Activated CD4-positive, alpha-beta memory T cell treated with anti-CD3 and anti-CD28 coated beads for 36 hours (primary cell): ENCODE measurements at regions of chr5 and their contacts with region 1.

Region 1: DNA sequence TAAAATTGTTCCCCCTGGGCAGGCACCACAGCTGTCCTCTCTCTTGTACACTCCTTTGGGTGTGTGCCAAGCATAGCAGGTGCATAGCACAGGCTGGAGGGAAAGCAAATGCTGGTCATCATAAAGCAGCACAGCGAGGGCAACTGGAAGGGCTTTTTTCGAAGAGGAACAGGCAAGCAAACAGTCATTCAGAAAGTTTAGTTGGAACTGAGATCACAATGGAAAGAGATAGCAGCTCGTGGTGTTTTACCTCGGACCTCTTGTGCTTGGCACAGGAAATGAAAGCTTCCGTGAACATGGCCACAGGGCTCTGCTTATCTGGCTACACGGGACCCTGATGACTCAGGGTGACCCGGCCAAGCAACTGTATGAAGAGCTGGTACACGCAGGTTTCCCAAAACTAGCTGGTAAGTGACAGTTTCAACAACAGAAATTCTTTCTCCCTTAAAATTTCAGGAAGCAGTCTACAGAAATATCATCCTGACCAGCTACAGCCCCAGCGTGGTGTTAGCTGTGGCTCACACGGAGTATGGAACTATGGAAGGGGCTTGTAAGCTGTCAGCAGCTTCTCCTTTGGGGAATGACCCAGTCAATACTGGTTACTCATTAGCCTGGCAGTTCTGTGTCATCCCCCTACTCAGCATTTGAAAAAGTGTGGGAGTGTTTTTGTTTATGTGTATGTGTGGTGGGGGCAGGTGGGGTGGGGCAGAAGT is 48.1 kb downstream of the POC5 start:
- DNase-seq: peak; percentile 87
- H3K4me3 Mint-ChIP-seq: peak overlapping the region; percentile 74
- H3K27ac Mint-ChIP-seq: peak overlapping the region; percentile 94
- H3K4me1 Mint-ChIP-seq: peaks cover 36% of the 10 kb centered on the region
- H3K27me3 Mint-ChIP-seq: no peaks in the 10 kb centered on the region

Region 2: DNA sequence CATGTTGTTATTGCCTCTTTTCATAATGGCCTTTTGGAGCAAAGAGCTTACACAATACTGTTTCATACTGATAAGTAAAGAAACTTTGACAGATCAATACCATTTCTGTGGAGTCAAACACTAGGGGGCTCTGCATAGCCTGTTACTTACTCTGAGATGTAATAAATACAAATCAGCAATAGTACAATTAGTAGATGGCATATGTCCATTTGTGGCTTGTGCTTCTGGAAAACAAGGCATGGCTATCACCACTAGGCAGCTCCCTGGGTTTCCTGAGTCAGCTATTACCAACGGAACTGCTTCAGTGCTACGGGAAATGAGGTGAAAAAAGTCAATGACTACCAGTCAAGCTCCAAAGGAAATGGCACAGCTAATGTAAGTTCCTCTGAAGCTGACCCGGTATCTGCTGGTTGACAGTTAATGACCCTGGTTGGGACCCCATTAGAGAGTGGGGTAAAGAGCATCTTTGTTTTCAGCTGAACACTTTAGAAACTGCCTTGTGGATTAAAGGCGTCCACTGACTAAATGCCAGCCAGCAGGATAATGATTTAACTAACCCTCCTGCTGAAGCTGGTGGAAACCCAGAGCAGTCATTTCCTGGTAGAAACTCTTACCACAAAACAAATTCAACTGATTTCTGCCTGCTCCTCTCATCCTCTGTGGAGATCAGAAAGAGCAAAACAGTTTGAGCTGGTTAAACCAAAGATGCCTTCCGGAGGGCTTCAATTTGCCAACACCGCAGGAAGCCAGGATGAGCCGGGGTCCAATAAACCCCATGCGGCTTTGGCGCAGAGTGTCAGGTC is 734.0 kb before region 1 on chr5:
- CTCF ChIA-PET with region 1: no interaction called
- POLR2A ChIA-PET with region 1: no interaction called
- intact Hi-C with region 1: loop called (anchors 10 kb)
- DNase-seq: peak; percentile 44
- H3K4me3 Mint-ChIP-seq: peak overlapping the region; percentile 42
- H3K27ac Mint-ChIP-seq: peak overlapping the region; percentile 71
- H3K4me1 Mint-ChIP-seq: peaks cover 26% of the 10 kb centered on the region
- H3K27me3 Mint-ChIP-seq: peaks cover 7% of the 10 kb centered on the region

Region 3: GRCh38 chr5:75351139-75351926 is 317.8 kb before region 1 on chr5:
- CTCF ChIA-PET with region 1: no interaction called
- POLR2A ChIA-PET with region 1: interaction called, 4 read pairs
- intact Hi-C with region 1: loop called (anchors 1 kb)
- DNase-seq: no peak
- H3K4me3 Mint-ChIP-seq: no peak overlapping the region
- H3K27ac Mint-ChIP-seq: peak overlapping the region; percentile 74
- H3K4me1 Mint-ChIP-seq: peaks cover 27% of the 10 kb centered on the region
- H3K27me3 Mint-ChIP-seq: no peaks in the 10 kb centered on the region

Region 4: GRCh38 chr5:75524071-75524470 is 145.1 kb before region 1 on chr5:
- CTCF ChIA-PET with region 1: no interaction called
- POLR2A ChIA-PET with region 1: no interaction called
- intact Hi-C with region 1: loop called (anchors 1 kb)
- DNase-seq: peak; percentile 37
- H3K4me3 Mint-ChIP-seq: no peak overlapping the region
- H3K27ac Mint-ChIP-seq: peak overlapping the region; percentile 57
- H3K4me1 Mint-ChIP-seq: peaks cover 63% of the 10 kb centered on the region
- H3K27me3 Mint-ChIP-seq: no peaks in the 10 kb centered on the region

Region 5: GRCh38 chr5:75681125-75681830 is 12.1 kb after region 1 on chr5:
- CTCF ChIA-PET with region 1: interaction called, 10 read pairs
- POLR2A ChIA-PET with region 1: interaction called, 8 read pairs
- intact Hi-C with region 1: loop called (anchors 1 kb)
- DNase-seq: no peak
- H3K4me3 Mint-ChIP-seq: no peak overlapping the region
- H3K27ac Mint-ChIP-seq: no peak overlapping the region
- H3K4me1 Mint-ChIP-seq: peaks cover 14% of the 10 kb centered on the region
- H3K27me3 Mint-ChIP-seq: no peaks in the 10 kb centered on the region